Right ventricle myocardium inferior (tissue), 1 donor: ENCODE measurements at regions of chr10 and their contacts with region 1.

Region 1: DNA sequence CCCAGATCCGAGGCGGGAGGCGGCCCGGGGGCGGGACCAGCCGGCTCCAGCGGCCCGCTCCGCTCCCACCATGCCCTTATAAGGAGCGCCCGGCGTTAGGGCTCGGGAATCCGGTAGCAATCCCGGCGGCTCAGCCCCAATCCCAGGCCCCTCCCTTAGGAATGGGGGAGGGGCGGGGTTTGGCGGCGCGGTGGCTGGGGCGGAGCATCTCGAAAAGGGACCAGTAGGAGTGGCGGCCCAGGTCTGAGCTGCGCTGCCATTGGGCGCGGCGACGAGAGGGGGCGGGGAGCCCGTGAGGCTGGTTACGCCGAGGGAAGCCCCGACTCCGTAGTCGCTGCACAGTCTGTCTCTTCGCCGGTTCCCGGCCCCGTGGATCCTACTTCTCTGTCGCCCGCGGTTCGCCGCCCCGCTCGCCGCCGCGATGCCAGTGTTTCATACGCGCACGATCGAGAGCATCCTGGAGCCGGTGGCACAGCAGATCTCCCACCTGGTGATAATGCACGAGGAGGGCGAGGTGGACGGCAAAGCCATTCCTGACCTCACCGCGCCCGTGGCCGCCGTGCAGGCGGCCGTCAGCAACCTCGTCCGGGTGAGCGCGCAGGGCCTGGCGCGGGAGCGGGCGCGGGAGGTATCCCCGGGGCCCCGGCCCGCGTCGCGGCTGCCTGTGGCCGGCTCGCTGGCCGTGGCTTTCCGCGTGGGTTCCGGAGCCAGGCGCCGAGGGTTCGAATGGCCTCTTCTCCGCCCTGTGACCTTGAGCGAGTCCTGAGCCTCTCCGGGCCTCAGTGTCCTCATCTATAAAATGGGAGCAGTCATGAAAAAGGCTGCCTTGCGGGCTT is at the start of gene VCL:
- DNase-seq: peak; percentile 99
- ATAC-seq: peak; percentile 97
- total RNA-seq, gene VCL: 237 TPM

Region 2: GRCh38 chr10:73827346-73828089 is 170.5 kb before region 1 on chr10:
- intact Hi-C with region 1: no loop called
- DNase-seq: no peak
- ATAC-seq: no peak

Region 3: GRCh38 chr10:73956476-73957359 is 41.3 kb before region 1 on chr10:
- intact Hi-C with region 1: loop called (anchors 5 kb)
- DNase-seq: no peak
- ATAC-seq: peak; percentile 56

Region 4: DNA sequence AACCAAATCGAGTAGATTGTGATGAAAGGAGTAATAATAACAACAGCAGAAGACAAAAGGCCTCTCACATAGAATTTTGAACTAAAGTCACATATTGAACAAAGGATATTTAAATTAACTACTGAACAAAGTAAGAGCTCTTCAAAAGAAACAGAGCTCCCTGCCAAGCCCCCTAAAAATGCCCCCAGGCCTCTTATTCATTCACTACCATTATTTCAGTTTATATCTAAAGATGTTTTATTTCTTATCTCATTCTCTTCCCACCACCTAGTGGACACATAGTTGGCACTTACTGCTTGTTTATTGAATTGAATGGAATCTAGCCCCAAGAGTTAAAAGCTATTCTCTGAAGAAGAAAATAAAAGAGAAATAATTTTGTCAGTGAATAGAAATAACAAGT is 37.3 kb after region 1 on chr10:
- intact Hi-C with region 1: loop called (anchors 5 kb)
- DNase-seq: no peak
- ATAC-seq: no peak

Region 5: DNA sequence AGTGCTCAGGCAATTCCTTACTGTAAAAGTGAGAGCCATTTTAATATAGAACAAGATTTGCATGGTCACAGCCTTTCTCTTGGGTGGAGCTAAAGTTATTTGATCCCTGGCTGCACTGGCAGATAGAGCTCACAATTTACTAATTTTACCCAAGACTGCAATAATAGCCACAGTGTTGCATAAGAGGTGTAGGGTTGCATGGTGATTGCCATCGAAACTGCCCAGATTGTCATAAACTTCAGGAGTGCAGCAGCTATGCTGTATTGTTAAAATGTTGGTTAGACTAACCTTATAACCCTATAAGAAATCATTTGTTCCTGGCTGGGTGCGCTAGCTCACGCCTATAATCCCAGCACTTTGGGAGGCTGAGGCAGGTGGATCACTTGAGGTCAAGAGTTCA is 49.9 kb after region 1 on chr10:
- intact Hi-C with region 1: no loop called
- DNase-seq: no peak
- ATAC-seq: no peak

Region 6: DNA sequence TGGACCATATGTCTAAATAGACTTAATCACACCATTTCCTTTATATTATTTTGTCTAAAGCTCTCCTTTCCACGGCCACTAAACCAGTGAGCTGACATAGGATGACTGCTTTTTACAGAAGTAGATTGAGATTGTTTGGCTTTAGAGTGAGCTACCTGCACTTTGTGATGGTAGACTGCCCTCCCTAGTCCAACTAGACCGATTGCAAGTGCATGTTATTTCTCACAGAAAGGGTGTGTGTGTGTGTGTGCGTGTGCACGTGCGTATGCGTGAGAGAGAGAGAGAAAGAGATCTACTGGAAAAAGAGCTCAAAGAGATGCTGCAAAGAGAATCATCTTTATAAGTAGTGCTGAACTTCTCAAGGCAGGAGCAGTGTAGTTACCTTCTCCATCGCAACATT is 60.7 kb after region 1 on chr10:
- intact Hi-C with region 1: loop called (anchors 5 kb)
- DNase-seq: no peak
- ATAC-seq: no peak

Region 7: DNA sequence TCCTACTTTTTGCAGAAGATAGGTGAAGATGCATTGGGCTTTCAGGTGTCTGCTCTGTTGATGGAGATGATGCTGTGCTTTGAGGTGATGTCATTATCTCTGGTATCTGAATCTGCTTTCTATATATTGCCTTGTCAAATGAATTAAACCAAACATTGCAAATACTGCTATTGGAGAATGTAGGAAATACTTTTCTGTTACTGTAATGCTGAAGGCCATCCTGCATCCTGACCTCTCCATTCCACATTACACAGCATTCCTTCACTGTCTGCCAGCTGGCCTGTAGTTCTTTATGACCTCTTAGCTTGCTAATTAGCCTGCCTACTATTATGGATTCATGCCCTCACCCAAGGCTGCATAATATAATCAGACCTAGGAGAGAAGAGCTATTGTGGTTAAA is 73.2 kb after region 1 on chr10:
- intact Hi-C with region 1: loop called (anchors 5 kb)
- DNase-seq: no peak
- ATAC-seq: peak; percentile 75